Activated CD4-positive, alpha-beta T cell treated with anti-CD3 and anti-CD28 coated beads, Interleukin-2, amount 10 ng/mL, durations not matched to agents 24 days and 14 days (primary cell): ENCODE measurements at regions of chr16 and their contacts with region 1.

Region 1: GRCh38 chr16:58299757-58300349 is 5.0 kb upstream of the PRSS54 start:
- DNase-seq: peak; percentile 78
- H3K4me3 Mint-ChIP-seq: no peak overlapping the region
- H3K27ac Mint-ChIP-seq: no peak overlapping the region
- H3K4me1 Mint-ChIP-seq: no peaks in the 10 kb centered on the region
- H3K27me3 Mint-ChIP-seq: peaks cover 12% of the 10 kb centered on the region

Region 2: DNA sequence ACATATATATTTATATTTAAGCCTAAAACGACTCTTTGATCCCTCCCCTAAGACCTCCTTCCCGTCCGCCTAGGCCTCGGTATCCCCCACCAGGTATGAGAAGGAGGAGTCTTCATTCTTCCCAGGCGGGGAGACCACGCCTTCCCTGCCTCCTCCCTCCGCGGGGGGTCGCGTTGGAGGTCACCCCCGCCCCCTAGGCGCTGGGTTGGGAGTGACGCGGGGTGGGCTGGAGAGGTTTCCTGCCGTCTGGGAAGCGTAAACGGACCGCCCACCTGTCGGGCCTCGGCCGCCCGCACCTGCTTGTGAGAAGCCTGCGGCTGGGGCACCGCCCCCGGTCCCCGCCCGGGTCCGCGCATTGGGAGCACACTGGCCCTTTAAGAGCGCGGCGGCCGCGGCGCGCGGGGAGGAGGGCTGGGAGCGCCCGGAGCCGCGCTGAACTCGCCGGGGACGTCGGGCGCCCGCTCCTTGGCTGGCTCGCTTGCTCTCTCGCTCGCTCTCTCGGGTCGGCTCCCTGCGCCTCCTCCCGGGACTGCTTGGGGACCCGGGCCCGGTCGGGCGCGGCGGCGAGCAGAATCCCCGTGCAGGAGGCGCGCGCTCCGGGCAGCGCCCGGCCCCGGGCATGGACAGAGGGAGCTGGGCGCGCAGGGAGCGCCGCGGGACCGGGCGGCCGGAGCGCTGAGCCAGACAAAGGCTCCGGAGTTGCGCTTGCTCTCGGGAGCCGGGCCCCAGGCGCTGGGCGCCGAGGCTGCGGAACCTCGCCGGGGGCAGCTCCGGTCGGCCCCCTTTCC is 274.3 kb before region 1 on chr16 and contains the start of gene MMP15:
- intact Hi-C with region 1: loop called (anchors 5 kb)
- DNase-seq: peak; percentile 89
- H3K4me3 Mint-ChIP-seq: peak within 1 kb of the TSS; percentile 88
- H3K27ac Mint-ChIP-seq: peak within 1 kb of the TSS; percentile 70
- H3K4me1 Mint-ChIP-seq: peaks cover 12% of the 10 kb centered on the region
- H3K27me3 Mint-ChIP-seq: peaks cover 26% of the 10 kb centered on the region
- total RNA-seq, gene MMP15: 0.89 and 1.1 TPM in 2 replicates

Region 3: GRCh38 chr16:58070585-58070984 is 229.3 kb before region 1 on chr16:
- intact Hi-C with region 1: no loop called
- DNase-seq: no peak
- H3K4me3 Mint-ChIP-seq: no peak overlapping the region
- H3K27ac Mint-ChIP-seq: no peak overlapping the region
- H3K4me1 Mint-ChIP-seq: no peaks in the 10 kb centered on the region
- H3K27me3 Mint-ChIP-seq: no peaks in the 10 kb centered on the region

Region 4: DNA sequence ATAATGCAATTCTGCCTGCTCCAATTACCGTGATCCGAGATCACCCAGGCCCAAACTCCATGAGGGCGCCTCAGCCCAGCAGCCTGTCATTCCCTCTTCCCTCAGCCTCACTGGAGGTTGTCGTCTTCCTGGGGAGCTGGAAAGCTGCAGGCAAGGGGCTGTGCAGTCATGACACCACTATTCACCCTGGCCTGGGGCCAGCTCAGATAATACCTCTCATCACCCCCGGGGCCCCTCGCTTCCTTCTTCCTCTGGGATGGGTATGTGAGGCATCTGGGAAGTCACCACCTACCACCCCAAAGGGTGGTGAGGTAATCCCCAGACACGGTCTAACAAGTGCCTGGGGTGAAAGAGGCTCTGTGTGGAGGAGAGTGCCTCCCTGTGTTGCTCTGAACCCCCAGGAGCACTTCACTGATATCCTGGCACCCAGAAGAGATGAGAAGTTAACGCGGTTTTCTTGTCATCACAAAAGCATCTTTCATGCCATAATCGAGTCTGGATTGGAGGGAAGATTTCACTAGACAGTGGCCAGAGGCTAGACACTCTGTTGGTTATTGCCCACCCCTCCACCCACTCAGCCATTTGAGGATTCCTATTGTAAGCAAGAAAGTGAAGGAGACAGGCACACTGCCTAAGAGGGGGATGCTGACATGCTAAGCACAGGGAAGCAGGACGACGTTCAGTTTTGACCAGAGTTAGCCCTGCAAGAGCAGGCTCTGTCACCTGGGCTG is 189.1 kb before region 1 on chr16:
- intact Hi-C with region 1: no loop called
- DNase-seq: no peak
- H3K4me3 Mint-ChIP-seq: no peak overlapping the region
- H3K27ac Mint-ChIP-seq: no peak overlapping the region
- H3K4me1 Mint-ChIP-seq: peaks cover under 1% of the 10 kb centered on the region
- H3K27me3 Mint-ChIP-seq: no peaks in the 10 kb centered on the region

Region 5: GRCh38 chr16:58317608-58318152 is 17.8 kb after region 1 on chr16:
- intact Hi-C with region 1: no loop called
- DNase-seq: no peak
- H3K4me3 Mint-ChIP-seq: no peak overlapping the region
- H3K27ac Mint-ChIP-seq: no peak overlapping the region
- H3K4me1 Mint-ChIP-seq: no peaks in the 10 kb centered on the region
- H3K27me3 Mint-ChIP-seq: peaks cover 3% of the 10 kb centered on the region